ENCODE measurements at regions of chr20 and their contacts with region 1.

Region 1: DNA sequence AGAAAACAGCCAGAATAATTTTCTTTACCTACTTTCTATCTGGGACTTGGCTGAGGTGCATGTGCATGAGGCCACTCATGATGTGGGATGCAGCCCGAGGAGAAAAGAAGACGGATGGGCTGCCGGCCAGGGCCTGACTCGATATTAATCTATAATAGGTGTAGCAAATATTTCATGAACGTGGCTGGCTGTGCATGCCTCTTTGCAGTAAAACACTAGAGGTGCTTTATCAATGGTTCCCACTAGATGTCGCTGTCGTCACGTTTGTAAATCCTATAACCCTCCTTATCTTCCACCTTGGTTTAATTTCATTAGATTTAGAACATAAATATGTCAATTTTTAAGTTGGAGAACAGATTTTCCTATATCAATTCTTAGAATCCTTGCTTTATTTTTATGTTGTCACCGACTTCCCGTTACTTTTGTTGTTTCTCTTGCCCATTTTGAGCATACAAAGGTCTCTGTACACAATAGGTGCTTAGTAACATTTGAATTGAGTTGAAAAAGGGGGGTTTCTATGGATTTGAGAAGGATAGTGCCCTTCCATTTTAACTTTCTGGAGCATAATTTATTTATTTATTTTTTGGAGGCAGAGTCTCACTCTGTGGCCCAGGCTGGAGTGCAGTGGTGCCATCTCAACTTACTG is 19.6 kb upstream of the FERMT1 start:
- DNase-seq: peak; percentile 48 to 56 (median 54)
- ATAC-seq: peak; percentile 84
- H3K4me3 ChIP-seq: no peak overlapping the region
- H3K27ac ChIP-seq: no peak overlapping the region
- H3K4me1 ChIP-seq: no peaks in the 10 kb centered on the region
- H3K27me3 ChIP-seq: no peaks in the 10 kb centered on the region
- CTCF ChIP-seq: peak; percentile 48 to 76 (median 67); a peak in 5 of 6 replicates
- EP300 ChIP-seq: no peak
- POLR2A ChIP-seq: no peak
- RAD21 ChIP-seq: peak; percentile 44 to 69; a peak in 3 of 4 replicates

Region 2: GRCh38 chr20:7375905-7376304 is 1233.4 kb after region 1 on chr20:
- CTCF ChIA-PET with region 1: no interaction called
- POLR2A ChIA-PET with region 1: no interaction called
- in situ Hi-C with region 1: no loop called
- intact Hi-C with region 1: loop called (anchors 10 kb)
- DNase-seq: peak; percentile 2 to 15 (median 6)
- ATAC-seq: no peak
- H3K4me3 ChIP-seq: no peak overlapping the region
- H3K27ac ChIP-seq: no peak overlapping the region
- H3K4me1 ChIP-seq: no peaks in the 10 kb centered on the region
- H3K27me3 ChIP-seq: no peaks in the 10 kb centered on the region
- CTCF ChIP-seq: peak in 1 of 3 experiments; percentile 51; a peak in 2 of 6 replicates
- EP300 ChIP-seq: no peak
- POLR2A ChIP-seq: no peak
- RAD21 ChIP-seq: peak; percentile 24 to 34; a peak in 2 of 4 replicates

Measured in K562 (cell line).